ENCODE measurements at regions of chr6 and their contacts with region 1.

Region 1: DNA sequence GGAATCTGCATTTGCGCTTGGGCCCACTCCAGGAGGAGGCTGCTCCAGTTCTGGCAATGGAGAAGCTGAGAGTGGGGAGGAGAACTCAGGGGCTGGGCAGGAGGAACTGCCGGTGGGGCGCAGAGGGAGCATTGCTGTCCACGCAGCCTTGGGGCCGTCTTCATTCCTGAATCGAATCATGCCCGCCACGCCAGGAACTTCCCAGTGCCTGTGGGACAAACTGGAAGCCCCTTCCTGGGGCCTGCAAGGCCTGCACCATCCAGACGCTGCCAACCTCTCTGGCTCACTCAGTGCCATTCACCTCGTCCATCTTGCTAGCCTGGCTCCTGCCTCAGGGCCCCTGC is 16.9 kb downstream of the RAB44 start:
- DNase-seq: no peak
- H3K4me3 ChIP-seq: no peak overlapping the region
- CTCF ChIP-seq: no peak

Region 2: DNA sequence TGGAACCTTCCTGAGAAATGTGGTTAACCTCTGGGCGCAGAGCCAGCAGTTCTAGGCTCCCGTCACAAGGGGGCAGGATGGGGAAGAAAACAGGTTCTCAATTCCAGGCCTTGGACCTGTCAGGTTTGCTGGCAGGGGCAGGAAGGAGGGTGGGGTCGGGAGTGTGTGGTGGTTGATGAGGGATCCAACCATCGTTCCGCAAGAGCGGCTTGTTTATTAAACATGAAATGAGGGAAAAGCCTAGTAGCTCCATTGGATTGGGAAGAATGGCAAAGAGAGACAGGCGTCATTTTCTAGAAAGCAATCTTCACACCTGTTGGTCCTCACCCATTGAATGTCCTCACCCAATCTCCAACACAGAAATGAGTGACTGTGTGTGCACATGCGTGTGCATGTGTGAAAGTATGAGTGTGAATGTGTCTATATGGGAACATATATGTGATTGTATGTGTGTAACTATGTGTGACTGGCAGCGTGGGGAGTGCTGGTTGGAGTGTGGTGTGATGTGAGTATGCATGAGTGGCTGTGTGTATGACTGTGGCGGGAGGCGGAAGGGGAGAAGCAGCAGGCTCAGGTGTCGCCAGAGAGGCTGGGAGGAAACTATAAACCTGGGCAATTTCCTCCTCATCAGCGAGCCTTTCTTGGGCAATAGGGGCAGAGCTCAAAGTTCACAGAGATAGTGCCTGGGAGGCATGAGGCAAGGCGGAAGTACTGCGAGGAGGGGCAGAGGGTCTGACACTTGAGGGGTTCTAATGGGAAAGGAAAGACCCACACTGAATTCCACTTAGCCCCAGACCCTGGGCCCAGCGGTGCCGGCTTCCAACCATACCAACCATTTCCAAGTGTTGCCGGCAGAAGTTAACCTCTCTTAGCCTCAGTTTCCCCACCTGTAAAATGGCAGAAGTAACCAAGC is 90.7 kb before region 1 on chr6:
- in situ Hi-C with region 1: loop called (anchors 5 kb)
- DNase-seq: peak; percentile 82
- H3K4me3 ChIP-seq: no peak overlapping the region
- CTCF ChIP-seq: peak; percentile 86